ENCODE measurements at regions of chr9 and their contacts with region 1.

Region 1: DNA sequence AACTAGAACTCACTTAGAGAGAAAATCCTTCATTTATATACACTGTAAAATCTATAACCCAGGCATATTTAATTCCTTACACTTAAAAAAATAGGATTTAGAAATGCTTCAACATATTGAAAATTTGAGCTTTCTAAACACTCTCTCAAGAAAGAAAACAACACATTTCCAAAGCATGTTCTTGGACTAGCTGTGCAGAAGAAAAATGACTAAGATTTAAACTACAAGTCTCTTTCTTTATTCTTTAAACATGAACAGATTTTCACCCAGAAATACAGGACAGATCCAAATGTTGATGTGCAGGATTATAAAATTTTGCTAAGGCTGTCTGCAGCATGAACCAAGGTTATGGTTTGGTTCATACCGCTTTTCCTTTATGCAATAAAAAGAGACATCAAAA is 77.7 kb upstream of the TUSC1 start:
- DNase-seq: no peak
- ATAC-seq: no peak
- H3K4me3 ChIP-seq: no peak overlapping the region
- H3K27ac ChIP-seq: no peak overlapping the region
- H3K4me1 ChIP-seq: no peaks in the 10 kb centered on the region
- H3K27me3 ChIP-seq: no peaks in the 10 kb centered on the region
- CTCF ChIP-seq: no peak

Region 2: GRCh38 chr9:25691786-25692185 is 64.2 kb before region 1 on chr9:
- intact Hi-C with region 1: loop called in 1 of 2 experiments (anchors 5 kb)
- DNase-seq: no peak
- ATAC-seq: no peak
- H3K4me3 ChIP-seq: no peak overlapping the region
- H3K27ac ChIP-seq: no peak overlapping the region
- H3K4me1 ChIP-seq: no peaks in the 10 kb centered on the region
- H3K27me3 ChIP-seq: no peaks in the 10 kb centered on the region
- CTCF ChIP-seq: no peak

Measured in psoas muscle (tissue), 8 donors.